Activated CD8-positive, alpha-beta memory T cell treated with anti-CD3 and anti-CD28 coated beads, Interleukin-2, amount 10 ng/mL, durations not matched to agents 7 days and 5 days (primary cell): ENCODE measurements at regions of chr1 and their contacts with region 1.

Region 1: GRCh38 chr1:31617917-31618660 is 600 bp downstream of the HCRTR1 start:
- DNase-seq: peak; percentile 53
- ATAC-seq: peak; percentile 72
- H3K4me3 Mint-ChIP-seq: no peak overlapping the region
- H3K27ac Mint-ChIP-seq: no peak overlapping the region
- H3K4me1 Mint-ChIP-seq: peaks cover 7% of the 10 kb centered on the region
- H3K27me3 Mint-ChIP-seq: peaks cover 27% of the 10 kb centered on the region

Region 2: GRCh38 chr1:31605908-31606427 is 12.1 kb before region 1 on chr1:
- CTCF ChIA-PET with region 1: interaction called, 17 read pairs
- DNase-seq: peak; percentile 80
- ATAC-seq: peak; percentile 98
- H3K4me3 Mint-ChIP-seq: no peak overlapping the region
- H3K27ac Mint-ChIP-seq: peak overlapping the region; percentile 75
- H3K4me1 Mint-ChIP-seq: peaks cover 21% of the 10 kb centered on the region
- H3K27me3 Mint-ChIP-seq: peaks cover 15% of the 10 kb centered on the region

Region 3: GRCh38 chr1:31633053-31633452 is 15.0 kb after region 1 on chr1:
- CTCF ChIA-PET with region 1: interaction called, 19 read pairs
- DNase-seq: no peak
- ATAC-seq: peak; percentile 33
- H3K4me3 Mint-ChIP-seq: no peak overlapping the region
- H3K27ac Mint-ChIP-seq: no peak overlapping the region
- H3K4me1 Mint-ChIP-seq: peaks cover 10% of the 10 kb centered on the region
- H3K27me3 Mint-ChIP-seq: no peaks in the 10 kb centered on the region

Region 4: DNA sequence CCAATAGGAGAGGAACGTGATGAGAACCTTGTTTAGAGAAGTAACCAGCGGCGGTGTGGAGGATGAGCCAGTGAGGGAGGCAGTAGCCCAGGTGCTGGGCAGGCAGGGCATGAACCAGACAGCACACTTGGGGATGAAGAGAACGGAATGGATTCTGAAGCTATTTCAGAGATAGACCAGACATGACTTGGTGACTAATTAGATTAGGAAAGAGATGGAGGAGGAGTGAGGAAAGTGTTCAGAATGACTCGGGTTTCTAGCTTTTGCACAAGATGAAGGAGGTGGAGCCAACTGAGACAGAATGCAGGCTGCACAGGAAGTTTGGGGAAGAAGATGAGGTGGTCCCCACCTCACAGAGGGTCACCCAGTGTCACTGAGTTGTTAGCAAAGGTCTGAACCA is 21.5 kb after region 1 on chr1:
- CTCF ChIA-PET with region 1: interaction called, 19 read pairs
- DNase-seq: no peak
- ATAC-seq: no peak
- H3K4me3 Mint-ChIP-seq: no peak overlapping the region
- H3K27ac Mint-ChIP-seq: no peak overlapping the region
- H3K4me1 Mint-ChIP-seq: peaks cover 28% of the 10 kb centered on the region
- H3K27me3 Mint-ChIP-seq: no peaks in the 10 kb centered on the region